A549 (cell line): ENCODE measurements at regions of chr15 and their contacts with region 1.

Region 1: GRCh38 chr15:63288778-63289378 is 11.5 kb downstream of the APH1B start:
- DNase-seq: peak; percentile 63 to 86
- ATAC-seq: peak; percentile 74 to 88; a peak in 5 of 6 replicates
- H3K4me3 ChIP-seq: no peak overlapping the region
- H3K27ac ChIP-seq: peak overlapping the region in 1 of 2 experiments; percentile 22; a peak in 2 of 6 replicates
- H3K4me1 ChIP-seq: peaks cover 9% of the 10 kb centered on the region; the same call in 2 of the 3 replicates
- CTCF ChIP-seq: peak; percentile 98
- EP300 ChIP-seq: no peak
- POLR2A ChIP-seq: no peak
- RAD21 ChIP-seq: peak; percentile 97 to 98

Region 2: GRCh38 chr15:63122002-63122893 is 166.6 kb before region 1 on chr15:
- CTCF ChIA-PET with region 1: no interaction called
- POLR2A ChIA-PET with region 1: no interaction called
- DNase-seq: peak; percentile 90 to 94
- ATAC-seq: peak; percentile 93 to 96
- H3K4me3 ChIP-seq: peak overlapping the region; percentile 89
- H3K27ac ChIP-seq: peak overlapping the region; percentile 90 to 91
- H3K4me1 ChIP-seq: peaks cover 14% of the 10 kb centered on the region; the same call in 2 of the 3 replicates
- CTCF ChIP-seq: no peak
- EP300 ChIP-seq: no peak
- POLR2A ChIP-seq: no peak
- RAD21 ChIP-seq: peak in 1 of 2 experiments; percentile 39; a peak in 2 of 5 replicates

Region 3: GRCh38 chr15:63306492-63307073 is 17.7 kb after region 1 on chr15:
- CTCF ChIA-PET with region 1: interaction called, 51 read pairs
- POLR2A ChIA-PET with region 1: no interaction called
- DNase-seq: no peak
- ATAC-seq: no peak
- H3K4me3 ChIP-seq: no peak overlapping the region
- H3K27ac ChIP-seq: no peak overlapping the region
- H3K4me1 ChIP-seq: no peaks in the 10 kb centered on the region
- CTCF ChIP-seq: no peak
- EP300 ChIP-seq: no peak
- POLR2A ChIP-seq: no peak
- RAD21 ChIP-seq: no peak

Region 4: GRCh38 chr15:63381301-63382204 is 92.7 kb after region 1 on chr15 and contains the start of gene CA12:
- CTCF ChIA-PET with region 1: interaction called, 28 read pairs
- POLR2A ChIA-PET with region 1: no interaction called
- DNase-seq: peak; percentile 75 to 81
- ATAC-seq: peak; percentile 78 to 81
- H3K4me3 ChIP-seq: peak within 1 kb of the TSS; percentile 92
- H3K27ac ChIP-seq: peak within 1 kb of the TSS; percentile 91 to 92
- H3K4me1 ChIP-seq: peaks cover 56% of the 10 kb centered on the region
- CTCF ChIP-seq: no peak
- EP300 ChIP-seq: no peak
- POLR2A ChIP-seq: peak; percentile 100
- RAD21 ChIP-seq: peak in 1 of 2 experiments; percentile 25; a peak in 2 of 5 replicates
- polyA plus RNA-seq, gene CA12: 323 and 389 TPM in 2 replicates

Region 5: GRCh38 chr15:63461230-63461985 is 172.5 kb after region 1 on chr15:
- CTCF ChIA-PET with region 1: interaction called, 10 read pairs
- POLR2A ChIA-PET with region 1: no interaction called
- DNase-seq: no peak
- ATAC-seq: peak in 1 of 2 experiments; percentile 57; a peak in 3 of 6 replicates
- H3K4me3 ChIP-seq: no peak overlapping the region
- H3K27ac ChIP-seq: peak overlapping the region; percentile 61 to 64
- H3K4me1 ChIP-seq: peaks cover 53% of the 10 kb centered on the region
- CTCF ChIP-seq: peak; percentile 18; the same call in 1 of the 3 replicates
- EP300 ChIP-seq: no peak
- POLR2A ChIP-seq: no peak
- RAD21 ChIP-seq: peak; percentile 51 to 52; a peak in 4 of 5 replicates